Activated CD4-positive, alpha-beta memory T cell treated with anti-CD3 and anti-CD28 coated beads for 36 hours (primary cell): ENCODE measurements at regions of chr2 and their contacts with region 1.

Region 1: DNA sequence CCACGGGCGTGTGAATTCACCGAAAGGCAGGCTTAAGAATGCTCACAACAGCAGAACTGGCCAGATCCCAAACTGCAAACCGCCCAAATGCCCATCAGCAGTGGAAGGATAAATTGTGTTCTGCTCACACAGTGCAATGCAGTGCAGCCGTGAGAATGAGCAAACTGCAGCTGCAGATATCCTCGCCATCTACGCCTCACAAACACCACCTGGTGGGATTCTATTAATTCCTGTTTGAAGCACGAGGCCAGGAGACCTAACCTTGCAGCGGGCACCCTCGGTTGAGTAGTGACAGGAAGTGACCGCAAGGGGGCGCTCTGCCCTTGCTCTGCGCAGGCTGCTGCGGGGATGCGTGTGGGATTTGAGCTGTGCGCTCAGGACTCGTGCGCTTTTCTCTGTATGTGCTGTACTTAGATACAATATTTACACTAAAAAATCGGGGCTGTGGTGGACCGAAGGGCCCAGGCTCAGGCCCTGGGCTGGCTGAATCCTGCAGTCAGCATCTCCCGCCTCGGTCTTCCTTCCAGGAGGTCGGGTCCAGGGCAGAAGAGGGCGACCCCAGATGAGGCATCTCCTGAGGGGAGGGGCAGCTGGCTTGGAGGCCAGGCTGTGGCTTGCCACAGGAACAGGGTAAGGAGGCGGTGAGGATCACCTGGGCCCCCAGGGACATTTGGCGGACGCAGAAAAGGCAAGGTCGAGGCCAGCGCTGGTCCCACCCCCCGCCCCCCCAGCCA is 19.8 kb upstream of the PDIA6 start:
- DNase-seq: peak; percentile 89
- H3K4me3 Mint-ChIP-seq: no peak overlapping the region
- H3K27ac Mint-ChIP-seq: no peak overlapping the region
- H3K4me1 Mint-ChIP-seq: peaks cover 3% of the 10 kb centered on the region
- H3K27me3 Mint-ChIP-seq: peaks cover 12% of the 10 kb centered on the region

Region 2: DNA sequence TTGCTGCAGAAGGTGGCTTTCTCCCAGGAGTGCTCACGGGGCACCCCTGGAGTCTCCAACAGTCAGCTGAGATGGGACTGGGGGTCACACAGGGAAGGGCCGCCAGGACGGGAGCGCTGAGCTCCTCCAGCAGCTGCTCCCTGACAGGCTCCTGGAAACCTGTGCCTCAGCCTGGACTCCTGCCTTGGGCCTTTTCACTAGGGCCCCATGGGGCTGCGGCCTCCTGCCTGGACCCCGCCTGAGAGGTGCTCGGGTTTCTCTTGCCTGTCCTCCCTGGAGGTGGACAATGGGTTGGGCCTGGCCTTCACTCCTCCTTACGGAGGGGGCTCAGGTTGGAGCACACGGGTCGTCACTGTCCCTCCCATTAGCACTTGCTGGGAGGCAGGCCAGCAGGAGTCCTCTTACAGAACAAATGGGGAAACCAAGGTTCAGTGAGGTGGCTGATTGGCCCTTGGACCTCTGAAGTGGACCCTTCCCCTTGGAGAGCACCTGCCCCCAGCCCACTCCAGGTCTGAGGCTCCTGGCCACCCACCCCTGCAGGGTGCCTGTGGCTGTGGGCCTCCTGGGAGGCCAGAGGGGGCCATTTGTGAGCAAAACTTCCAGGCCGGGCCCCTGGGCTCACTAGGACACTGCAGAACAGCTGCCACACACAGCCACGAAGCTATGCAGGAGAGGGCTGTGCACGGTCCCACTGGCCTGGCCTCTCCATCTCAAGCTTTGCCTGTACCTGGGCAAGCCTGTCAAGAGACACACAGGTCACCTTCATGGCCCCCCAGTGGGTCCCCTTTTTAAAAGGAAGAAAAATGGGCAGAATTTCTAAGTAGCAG is 327.2 kb before region 1 on chr2:
- CTCF ChIA-PET with region 1: no interaction called
- POLR2A ChIA-PET with region 1: no interaction called
- intact Hi-C with region 1: no loop called
- DNase-seq: no peak
- H3K4me3 Mint-ChIP-seq: no peak overlapping the region
- H3K27ac Mint-ChIP-seq: no peak overlapping the region
- H3K4me1 Mint-ChIP-seq: no peaks in the 10 kb centered on the region
- H3K27me3 Mint-ChIP-seq: no peaks in the 10 kb centered on the region

Region 3: DNA sequence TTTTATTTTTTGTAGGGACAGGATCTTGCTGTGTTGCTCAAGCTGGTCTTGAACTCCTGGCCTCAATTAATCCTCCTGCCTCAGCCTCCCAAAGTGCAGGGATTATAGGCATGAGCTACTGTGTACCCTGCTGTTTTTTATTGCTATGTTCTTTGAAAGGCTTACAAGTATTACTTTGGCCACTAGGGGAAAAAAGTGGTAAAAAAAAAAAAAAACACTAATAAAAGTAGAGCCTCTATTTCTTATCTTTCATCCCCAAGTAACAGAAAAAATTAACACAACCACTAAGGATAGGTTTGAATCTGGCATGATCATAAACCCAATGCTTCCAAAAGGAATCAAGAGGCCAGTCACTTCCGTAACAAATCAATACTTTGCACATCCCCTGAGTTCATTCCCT is 154.1 kb before region 1 on chr2:
- CTCF ChIA-PET with region 1: no interaction called
- POLR2A ChIA-PET with region 1: no interaction called
- intact Hi-C with region 1: no loop called
- DNase-seq: no peak
- H3K4me3 Mint-ChIP-seq: no peak overlapping the region
- H3K27ac Mint-ChIP-seq: no peak overlapping the region
- H3K4me1 Mint-ChIP-seq: peaks cover 35% of the 10 kb centered on the region
- H3K27me3 Mint-ChIP-seq: no peaks in the 10 kb centered on the region

Region 4: GRCh38 chr2:10790228-10790979 is 42.0 kb before region 1 on chr2:
- CTCF ChIA-PET with region 1: interaction called, 15 read pairs
- POLR2A ChIA-PET with region 1: no interaction called
- intact Hi-C with region 1: loop called (anchors 2 kb)
- DNase-seq: peak; percentile 70
- H3K4me3 Mint-ChIP-seq: peak overlapping the region; percentile 54
- H3K27ac Mint-ChIP-seq: peak overlapping the region; percentile 84
- H3K4me1 Mint-ChIP-seq: peaks cover 38% of the 10 kb centered on the region
- H3K27me3 Mint-ChIP-seq: no peaks in the 10 kb centered on the region

Region 5: GRCh38 chr2:10821296-10821695 is 11.1 kb before region 1 on chr2:
- CTCF ChIA-PET with region 1: interaction called, 10 read pairs
- POLR2A ChIA-PET with region 1: no interaction called
- intact Hi-C with region 1: no loop called
- DNase-seq: no peak
- H3K4me3 Mint-ChIP-seq: no peak overlapping the region
- H3K27ac Mint-ChIP-seq: no peak overlapping the region
- H3K4me1 Mint-ChIP-seq: no peaks in the 10 kb centered on the region
- H3K27me3 Mint-ChIP-seq: peaks cover 13% of the 10 kb centered on the region

Region 6: GRCh38 chr2:11124503-11125068 is 292.2 kb after region 1 on chr2:
- CTCF ChIA-PET with region 1: interaction called, 173 read pairs
- POLR2A ChIA-PET with region 1: interaction called, 3 read pairs
- intact Hi-C with region 1: loop called (anchors 1 kb)
- DNase-seq: peak; percentile 84
- H3K4me3 Mint-ChIP-seq: no peak overlapping the region
- H3K27ac Mint-ChIP-seq: no peak overlapping the region
- H3K4me1 Mint-ChIP-seq: peaks cover 8% of the 10 kb centered on the region
- H3K27me3 Mint-ChIP-seq: no peaks in the 10 kb centered on the region

Region 7: GRCh38 chr2:11688222-11689069 is 856.1 kb after region 1 on chr2:
- CTCF ChIA-PET with region 1: no interaction called
- POLR2A ChIA-PET with region 1: no interaction called
- intact Hi-C with region 1: loop called (anchors 10 kb)
- DNase-seq: peak; percentile 88
- H3K4me3 Mint-ChIP-seq: peak overlapping the region; percentile 7
- H3K27ac Mint-ChIP-seq: no peak overlapping the region
- H3K4me1 Mint-ChIP-seq: peaks cover 11% of the 10 kb centered on the region
- H3K27me3 Mint-ChIP-seq: peaks cover 12% of the 10 kb centered on the region